ENCODE measurements at regions of chr22 and their contacts with region 1.

Region 1: DNA sequence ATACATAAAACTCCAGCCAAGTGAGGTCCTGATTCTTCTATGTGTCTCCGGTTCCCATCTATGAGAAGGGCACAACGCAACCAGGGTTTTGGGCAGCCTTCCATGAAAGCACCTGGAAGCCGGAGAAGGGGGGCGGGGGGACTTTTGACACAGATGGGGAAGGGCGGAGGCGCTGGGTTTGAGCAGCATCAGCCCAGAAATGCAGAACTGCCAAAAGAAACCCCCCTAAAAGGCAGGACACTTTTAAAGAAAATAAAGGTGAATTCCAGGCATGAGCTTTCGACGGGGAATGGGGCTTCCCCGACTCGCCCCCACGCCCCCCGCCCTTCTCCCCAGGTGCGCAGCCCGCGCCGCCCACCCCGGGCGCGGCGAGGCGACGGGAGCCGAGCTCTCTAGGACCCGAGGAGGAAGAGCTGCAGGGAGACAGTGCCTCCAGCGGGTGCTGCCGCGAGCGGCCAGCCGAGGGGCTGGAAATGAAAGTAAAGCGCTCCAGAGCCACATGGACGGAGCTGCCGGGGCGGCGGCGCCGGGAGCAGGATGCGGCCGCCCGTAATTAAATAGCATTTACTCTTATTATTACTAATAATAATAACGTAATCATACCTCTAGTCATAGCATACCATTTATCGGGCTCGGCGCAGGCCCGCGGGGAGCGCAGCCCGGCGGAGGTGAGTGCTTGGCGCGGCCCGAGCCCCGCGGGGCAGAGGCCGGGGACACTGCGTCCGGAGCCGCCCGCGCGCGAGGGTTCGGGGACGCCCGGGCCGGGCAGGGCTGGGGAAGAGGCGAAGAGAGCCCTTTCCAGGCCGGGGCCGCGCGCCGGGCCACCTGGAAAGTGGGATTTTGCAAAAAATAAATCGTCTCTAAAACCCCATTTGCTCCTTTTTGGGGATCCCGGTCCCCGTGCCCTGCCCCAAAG is at the start of gene ZC3H7B:
- DNase-seq: peak; percentile 84 to 92 (median 85)
- ATAC-seq: peak; percentile 91 to 98 (median 98)
- H3K4me3 ChIP-seq: peak within 1 kb of the TSS; percentile 75 to 100 (median 98)
- H3K27ac ChIP-seq: peak within 1 kb of the TSS; percentile 71 to 95 (median 86)
- H3K4me1 ChIP-seq: peaks cover 0 to 34% (median 16%) of the 10 kb centered on the region in 12 donors
- H3K27me3 ChIP-seq: no peaks in the 10 kb centered on the region
- CTCF ChIP-seq: peak; percentile 25 to 81 (median 62)
- POLR2A ChIP-seq: peak in 1 of 2 donors; percentile 32
- total RNA-seq, gene ZC3H7B: 32.2 to 50.4 (median 37.1) TPM

Region 2: DNA sequence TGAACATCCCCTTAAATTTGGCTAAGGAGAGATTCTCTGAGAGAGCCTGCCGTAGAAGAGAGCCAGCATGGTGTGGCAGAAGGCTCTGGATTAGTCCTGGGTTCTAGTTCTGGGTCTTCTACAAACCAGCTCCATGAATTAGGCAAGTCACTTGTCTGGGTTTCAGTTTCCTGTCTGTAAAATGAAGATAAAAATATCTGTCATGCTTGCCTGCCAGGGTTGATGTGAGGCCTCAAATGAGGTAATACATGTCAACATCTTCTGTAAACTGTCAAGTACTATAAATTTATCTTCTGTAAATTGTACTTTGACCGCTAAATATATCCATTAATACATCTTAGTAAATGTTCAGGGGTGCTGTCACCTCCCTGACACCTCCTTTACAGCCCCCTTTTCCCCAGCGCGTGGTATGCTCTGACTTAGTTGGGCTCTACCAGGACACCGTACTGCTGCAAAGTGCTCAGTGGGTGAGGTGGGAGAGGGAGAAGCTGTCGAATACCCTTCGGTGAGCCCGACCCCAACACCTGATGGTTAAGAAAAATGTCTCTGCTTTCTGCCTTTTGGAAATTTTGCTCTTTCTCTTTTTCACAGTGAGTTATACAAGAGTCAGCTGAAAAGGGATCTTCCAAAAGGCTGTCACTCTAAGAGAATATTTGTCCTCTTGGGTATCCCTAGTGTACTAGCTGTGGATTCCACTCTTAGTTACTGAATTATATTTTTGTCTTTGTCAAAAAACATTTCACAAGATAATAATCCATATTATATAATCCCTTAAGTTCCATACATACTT is 335.2 kb before region 1 on chr22:
- intact Hi-C with region 1: no loop called
- DNase-seq: no peak
- ATAC-seq: peak; percentile 30 to 61 (median 50)
- H3K4me3 ChIP-seq: no peak overlapping the region
- H3K27ac ChIP-seq: peak overlapping the region in 6 of 12 donors; percentile 8 to 73 (median 43)
- H3K4me1 ChIP-seq: peaks cover 0 to 33% (median 17%) of the 10 kb centered on the region in 12 donors
- H3K27me3 ChIP-seq: no peaks in the 10 kb centered on the region
- CTCF ChIP-seq: no peak
- POLR2A ChIP-seq: no peak

Region 3: GRCh38 chr22:41264408-41264941 is 36.9 kb before region 1 on chr22:
- intact Hi-C with region 1: no loop called
- DNase-seq: no peak
- ATAC-seq: no peak
- H3K4me3 ChIP-seq: no peak overlapping the region
- H3K27ac ChIP-seq: no peak overlapping the region
- H3K4me1 ChIP-seq: peaks cover 0 to 21% (median 5%) of the 10 kb centered on the region in 12 donors
- H3K27me3 ChIP-seq: no peaks in the 10 kb centered on the region
- CTCF ChIP-seq: no peak
- POLR2A ChIP-seq: no peak

Region 4: GRCh38 chr22:41367039-41367679 is 65.8 kb after region 1 on chr22:
- intact Hi-C with region 1: loop called in 3 of 10 experiments (anchors 5 to 10 kb)
- DNase-seq: peak; percentile 98
- ATAC-seq: peak; percentile 94 to 97 (median 96)
- H3K4me3 ChIP-seq: peak overlapping the region in 11 of 12 donors; percentile 7 to 82 (median 47)
- H3K27ac ChIP-seq: peak overlapping the region in 11 of 12 donors; percentile 15 to 87 (median 75)
- H3K4me1 ChIP-seq: peaks cover 5 to 37% (median 26%) of the 10 kb centered on the region in 12 donors
- H3K27me3 ChIP-seq: no peaks in the 10 kb centered on the region
- CTCF ChIP-seq: peak in 9 of 12 donors; percentile 12 to 70 (median 37)
- POLR2A ChIP-seq: peak in 1 of 2 donors; percentile 45